ENCODE measurements at regions of chr11 and their contacts with region 1.

Region 1: GRCh38 chr11:7892840-7893254 is 38.2 kb downstream of the OR10A6 start:
- DNase-seq: peak; percentile 58
- H3K4me3 ChIP-seq: no peak overlapping the region
- H3K27ac ChIP-seq: no peak overlapping the region
- H3K4me1 ChIP-seq: no peaks in the 10 kb centered on the region
- H3K27me3 ChIP-seq: no peaks in the 10 kb centered on the region
- CTCF ChIP-seq: peak; percentile 69

Region 2: GRCh38 chr11:7986768-7987559 is 94.1 kb after region 1 on chr11 and contains the start of gene EIF3F:
- CTCF ChIA-PET with region 1: interaction called, 3 read pairs
- POLR2A ChIA-PET with region 1: no interaction called
- intact Hi-C with region 1: loop called (anchors 1 kb)
- DNase-seq: peak; percentile 98
- H3K4me3 ChIP-seq: peak within 1 kb of the TSS; percentile 89
- H3K27ac ChIP-seq: peak within 1 kb of the TSS; percentile 76
- H3K4me1 ChIP-seq: peaks cover 5% of the 10 kb centered on the region
- H3K27me3 ChIP-seq: no peaks in the 10 kb centered on the region
- CTCF ChIP-seq: peak; percentile 74
- total RNA-seq, gene EIF3F: 146 and 151 TPM in 2 replicates

Region 3: GRCh38 chr11:8110396-8110795 is 217.5 kb after region 1 on chr11:
- CTCF ChIA-PET with region 1: no interaction called
- POLR2A ChIA-PET with region 1: no interaction called
- intact Hi-C with region 1: no loop called
- DNase-seq: no peak
- H3K4me3 ChIP-seq: no peak overlapping the region
- H3K27ac ChIP-seq: no peak overlapping the region
- H3K4me1 ChIP-seq: no peaks in the 10 kb centered on the region
- H3K27me3 ChIP-seq: peaks cover 3% of the 10 kb centered on the region
- CTCF ChIP-seq: no peak

Measured in A673 (cell line).